Activated CD4-positive, alpha-beta memory T cell treated with anti-CD3 and anti-CD28 coated beads for 36 hours (primary cell): ENCODE measurements at regions of chr7 and their contacts with region 1.

Region 1: DNA sequence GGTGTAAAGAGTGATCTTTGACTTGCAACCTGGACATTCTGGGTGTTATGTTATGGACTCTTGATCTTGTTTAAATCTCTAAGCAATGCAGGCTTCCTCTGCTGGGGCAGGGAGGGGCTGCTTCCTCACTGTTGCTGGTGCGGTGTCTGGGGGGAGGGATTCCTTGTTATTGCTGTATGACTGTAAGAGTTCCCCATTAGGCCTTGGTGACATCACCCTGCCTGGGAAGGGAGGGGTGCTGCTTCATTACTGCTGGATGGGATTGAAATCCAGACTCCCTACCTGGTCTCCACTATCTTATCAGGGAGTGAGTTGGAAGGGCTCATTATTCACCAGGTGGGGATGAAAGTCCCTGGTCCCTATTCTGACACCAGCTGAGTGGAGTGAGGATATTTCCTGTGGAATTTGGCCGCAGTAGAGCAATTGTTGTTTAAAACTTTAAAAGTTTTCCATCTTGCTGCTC is 8.8 kb downstream of the OGDH start:
- DNase-seq: peak; percentile 66
- H3K4me3 Mint-ChIP-seq: peak overlapping the region; percentile 1
- H3K27ac Mint-ChIP-seq: peak overlapping the region; percentile 65
- H3K4me1 Mint-ChIP-seq: peaks cover 63% of the 10 kb centered on the region
- H3K27me3 Mint-ChIP-seq: no peaks in the 10 kb centered on the region

Region 2: GRCh38 chr7:44534501-44534900 is 80.7 kb before region 1 on chr7:
- CTCF ChIA-PET with region 1: no interaction called
- POLR2A ChIA-PET with region 1: no interaction called
- intact Hi-C with region 1: no loop called
- DNase-seq: peak; percentile 59
- H3K4me3 Mint-ChIP-seq: no peak overlapping the region
- H3K27ac Mint-ChIP-seq: no peak overlapping the region
- H3K4me1 Mint-ChIP-seq: no peaks in the 10 kb centered on the region
- H3K27me3 Mint-ChIP-seq: no peaks in the 10 kb centered on the region

Region 3: DNA sequence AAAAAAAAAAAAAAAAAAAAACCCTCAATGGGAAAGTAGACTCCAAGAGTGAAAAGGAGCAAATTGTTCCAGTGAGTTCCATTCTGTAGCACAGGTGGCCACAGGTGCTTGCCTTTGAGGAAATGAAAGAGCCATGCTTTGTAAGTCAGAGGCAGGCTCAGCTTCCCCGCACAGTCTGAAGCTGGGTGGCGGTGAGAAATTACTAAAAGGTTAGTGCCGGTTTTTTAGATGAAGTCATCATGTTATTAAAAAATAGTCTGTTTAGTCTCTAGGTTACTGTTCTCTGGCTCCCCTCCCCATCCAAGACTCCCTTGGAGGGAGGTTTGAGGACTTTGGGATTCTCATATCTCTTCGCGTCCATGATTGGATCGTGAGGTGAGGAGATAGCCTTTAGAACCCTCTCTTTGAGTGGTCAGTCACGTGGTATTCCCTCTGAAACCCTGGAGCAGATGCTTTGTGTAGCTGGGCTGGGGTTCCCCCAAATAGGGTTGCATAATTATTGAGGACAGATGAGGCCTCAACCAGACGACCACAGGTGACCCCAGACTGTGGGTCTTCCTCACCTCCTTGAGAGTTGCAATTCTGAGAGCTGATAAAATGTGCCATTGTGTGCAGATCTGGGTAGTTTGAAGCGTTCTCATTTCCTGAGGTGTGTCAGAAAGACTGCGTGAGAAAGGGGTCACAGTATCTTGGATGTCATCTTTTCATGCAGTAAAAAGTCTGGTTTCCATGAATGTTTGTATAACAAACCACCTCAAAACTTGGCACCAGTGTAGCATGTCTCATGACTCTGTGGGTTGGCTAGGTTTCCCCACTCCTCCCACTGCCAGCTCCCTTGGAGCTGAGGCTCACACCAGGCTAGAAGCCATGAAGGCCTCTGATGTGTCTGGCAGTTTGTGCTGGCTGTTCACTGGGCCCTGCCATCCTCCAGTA is 18.3 kb after region 1 on chr7:
- CTCF ChIA-PET with region 1: interaction called, 10 read pairs
- POLR2A ChIA-PET with region 1: interaction called, 34 read pairs
- intact Hi-C with region 1: loop called (anchors 1 kb)
- DNase-seq: peak; percentile 84
- H3K4me3 Mint-ChIP-seq: peak overlapping the region; percentile 53
- H3K27ac Mint-ChIP-seq: peak overlapping the region; percentile 96
- H3K4me1 Mint-ChIP-seq: peaks cover 97% of the 10 kb centered on the region
- H3K27me3 Mint-ChIP-seq: no peaks in the 10 kb centered on the region

Region 4: GRCh38 chr7:44678471-44679179 is 63.4 kb after region 1 on chr7:
- CTCF ChIA-PET with region 1: no interaction called
- POLR2A ChIA-PET with region 1: no interaction called
- intact Hi-C with region 1: no loop called
- DNase-seq: no peak
- H3K4me3 Mint-ChIP-seq: no peak overlapping the region
- H3K27ac Mint-ChIP-seq: no peak overlapping the region
- H3K4me1 Mint-ChIP-seq: no peaks in the 10 kb centered on the region
- H3K27me3 Mint-ChIP-seq: no peaks in the 10 kb centered on the region

Region 5: GRCh38 chr7:44735403-44736165 is 120.4 kb after region 1 on chr7:
- CTCF ChIA-PET with region 1: interaction called, 5 read pairs
- POLR2A ChIA-PET with region 1: no interaction called
- intact Hi-C with region 1: loop called (anchors 1 kb)
- DNase-seq: peak; percentile 62
- H3K4me3 Mint-ChIP-seq: peak overlapping the region; percentile 4
- H3K27ac Mint-ChIP-seq: peak overlapping the region; percentile 73
- H3K4me1 Mint-ChIP-seq: peaks cover 19% of the 10 kb centered on the region
- H3K27me3 Mint-ChIP-seq: no peaks in the 10 kb centered on the region